Naive thymus-derived CD4-positive, alpha-beta T cell (primary cell): ENCODE measurements at regions of chr1 and their contacts with region 1.

Region 1: DNA sequence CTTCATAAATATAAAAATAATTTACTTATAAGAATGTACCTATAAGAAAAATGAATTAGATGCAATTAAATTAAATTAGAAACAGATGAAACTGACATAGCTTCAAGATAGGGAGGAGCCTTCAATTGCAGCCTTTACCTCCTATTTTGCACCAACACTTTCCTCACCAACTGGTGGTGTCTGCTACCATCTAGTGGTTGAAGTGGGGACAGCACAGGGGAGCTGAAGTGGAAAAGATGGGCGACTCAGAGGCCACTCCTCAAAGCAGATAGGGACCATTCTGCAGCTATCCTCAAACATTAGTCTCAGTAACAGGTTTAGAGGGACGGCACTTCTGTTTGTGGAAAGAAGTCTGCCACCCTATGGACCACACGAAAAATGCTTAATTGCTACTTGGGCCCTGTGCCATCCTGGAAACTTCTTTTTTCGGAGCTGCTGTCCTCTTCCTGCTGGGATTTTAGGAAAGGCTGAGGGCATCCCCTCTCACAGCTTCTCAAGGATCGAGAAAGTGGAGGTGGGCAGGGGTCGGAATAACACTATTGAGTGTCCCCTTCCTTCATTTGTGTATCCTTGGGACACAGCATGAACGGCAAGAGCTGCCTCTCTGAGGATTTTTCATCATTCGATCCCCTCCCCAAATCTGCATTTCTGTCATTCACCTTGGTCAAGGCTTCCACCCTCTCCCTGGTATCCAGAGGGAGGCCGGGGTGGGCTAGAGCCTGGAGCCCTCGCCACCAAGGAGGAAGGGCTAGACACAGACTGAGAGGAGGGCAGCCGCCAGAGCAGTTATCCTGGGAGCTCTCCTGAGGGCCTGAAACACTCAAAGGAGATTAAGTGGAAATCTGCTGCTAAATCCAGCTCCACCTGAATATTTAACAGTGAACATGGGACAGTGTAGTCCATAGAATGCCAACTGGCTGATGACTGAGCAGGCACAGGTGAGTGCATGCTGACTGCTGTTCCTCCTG is 9.6 kb downstream of the PROK1 start:
- DNase-seq: peak; percentile 66 to 91 (median 83)
- ATAC-seq: peak; percentile 96
- H3K4me3 ChIP-seq: no peak overlapping the region
- H3K4me3 Mint-ChIP-seq: no peak overlapping the region
- H3K27ac ChIP-seq: no peak overlapping the region
- H3K27ac Mint-ChIP-seq: no peak overlapping the region
- H3K4me1 ChIP-seq: no peaks in the 10 kb centered on the region
- H3K4me1 Mint-ChIP-seq: no peaks in the 10 kb centered on the region
- H3K27me3 ChIP-seq: no peaks in the 10 kb centered on the region
- H3K27me3 Mint-ChIP-seq: no peaks in the 10 kb centered on the region

Region 2: GRCh38 chr1:110196917-110197765 is 263.4 kb before region 1 on chr1:
- CTCF ChIA-PET with region 1: interaction called, 68 read pairs
- POLR2A ChIA-PET with region 1: interaction called, 5 read pairs
- intact Hi-C with region 1: loop called (anchors 1 kb)
- DNase-seq: peak; percentile 34 to 77 (median 57)
- ATAC-seq: peak; percentile 91
- H3K4me3 ChIP-seq: no peak overlapping the region
- H3K4me3 Mint-ChIP-seq: no peak overlapping the region
- H3K27ac ChIP-seq: no peak overlapping the region
- H3K27ac Mint-ChIP-seq: no peak overlapping the region
- H3K4me1 ChIP-seq: no peaks in the 10 kb centered on the region
- H3K4me1 Mint-ChIP-seq: peaks cover 0 to 6% (median 0%) of the 10 kb centered on the region in 7 donors
- H3K27me3 ChIP-seq: no peaks in the 10 kb centered on the region
- H3K27me3 Mint-ChIP-seq: no peaks in the 10 kb centered on the region

Region 3: GRCh38 chr1:110312188-110313121 is 148.1 kb before region 1 on chr1:
- CTCF ChIA-PET with region 1: interaction called, 15 read pairs
- POLR2A ChIA-PET with region 1: no interaction called
- intact Hi-C with region 1: loop called (anchors 1 to 2 kb)
- DNase-seq: peak; percentile 51 to 80 (median 71)
- ATAC-seq: peak; percentile 95
- H3K4me3 ChIP-seq: no peak overlapping the region
- H3K4me3 Mint-ChIP-seq: no peak overlapping the region
- H3K27ac ChIP-seq: no peak overlapping the region
- H3K27ac Mint-ChIP-seq: peak overlapping the region in 1 of 9 donors; percentile 14
- H3K4me1 ChIP-seq: peaks cover 0 to 5% of the 10 kb centered on the region in 2 donors
- H3K4me1 Mint-ChIP-seq: peaks cover 0 to 2% (median 0%) of the 10 kb centered on the region in 7 donors
- H3K27me3 ChIP-seq: no peaks in the 10 kb centered on the region
- H3K27me3 Mint-ChIP-seq: no peaks in the 10 kb centered on the region

Region 4: DNA sequence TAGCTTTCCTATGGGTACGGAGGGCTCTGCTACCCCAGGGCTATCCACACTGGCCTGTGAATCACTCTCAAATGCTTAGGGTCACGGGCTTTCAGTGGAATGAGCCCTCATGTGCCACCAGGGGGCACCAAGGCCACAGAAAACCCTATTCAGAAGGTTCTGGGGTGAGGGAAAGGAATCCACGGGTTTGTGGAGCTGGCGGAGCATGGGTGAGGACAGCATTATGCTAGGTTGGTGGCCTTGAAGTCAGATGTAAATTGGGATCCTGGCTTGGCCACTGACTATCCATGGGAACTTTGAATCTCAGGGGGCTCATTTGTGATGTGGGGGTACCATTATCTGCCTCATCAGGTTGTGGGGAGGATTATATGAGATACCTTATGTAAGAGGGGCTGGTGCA is 48.0 kb before region 1 on chr1:
- CTCF ChIA-PET with region 1: interaction called, 20 read pairs
- POLR2A ChIA-PET with region 1: interaction called, 3 read pairs
- intact Hi-C with region 1: loop called (anchors 1 kb)
- DNase-seq: peak; percentile 22 to 59 (median 51)
- ATAC-seq: peak; percentile 71
- H3K4me3 ChIP-seq: no peak overlapping the region
- H3K4me3 Mint-ChIP-seq: no peak overlapping the region
- H3K27ac ChIP-seq: no peak overlapping the region
- H3K27ac Mint-ChIP-seq: peak overlapping the region in 2 of 9 donors; percentile 15 to 77
- H3K4me1 ChIP-seq: peaks cover 7 to 13% of the 10 kb centered on the region in 2 donors
- H3K4me1 Mint-ChIP-seq: peaks cover 9 to 22% (median 18%) of the 10 kb centered on the region in 7 donors
- H3K27me3 ChIP-seq: no peaks in the 10 kb centered on the region
- H3K27me3 Mint-ChIP-seq: no peaks in the 10 kb centered on the region